Endothelial cell of umbilical vein (primary cell): ENCODE measurements at regions of chr4 and their contacts with region 1.

Region 1: DNA sequence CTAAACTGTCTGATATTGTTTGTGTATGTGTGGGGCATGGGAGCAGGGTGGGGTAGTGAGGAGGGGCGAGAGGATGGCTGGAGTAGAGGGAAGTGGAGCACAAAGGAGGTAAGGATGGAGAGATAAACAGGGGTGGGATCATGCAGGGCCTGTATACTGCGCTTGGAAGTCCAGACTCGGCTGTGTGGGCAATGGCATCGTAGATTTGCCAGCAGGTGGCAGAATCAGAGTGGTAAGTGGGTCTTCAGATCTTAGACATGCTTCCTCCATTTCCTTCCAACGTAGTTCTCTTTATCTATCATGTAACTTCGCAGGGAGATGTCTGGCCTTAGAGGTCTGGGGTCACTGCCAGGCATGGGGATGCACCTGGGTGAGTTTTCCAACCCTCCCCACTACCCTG is 155.5 kb downstream of the PDGFRA start:
- DNase-seq: peak; percentile 47
- H3K4me3 ChIP-seq: no peak overlapping the region
- H3K27ac ChIP-seq: no peak overlapping the region
- H3K4me1 ChIP-seq: no peaks in the 10 kb centered on the region
- H3K27me3 ChIP-seq: no peaks in the 10 kb centered on the region
- CTCF ChIP-seq: peak; percentile 24 to 53
- POLR2A ChIP-seq: no peak

Region 2: GRCh38 chr4:54363037-54363436 is 21.5 kb before region 1 on chr4:
- CTCF ChIA-PET with region 1: no interaction called
- POLR2A ChIA-PET with region 1: no interaction called
- dilution Hi-C with region 1: no loop called
- intact Hi-C with region 1: no loop called
- DNase-seq: no peak
- H3K4me3 ChIP-seq: no peak overlapping the region
- H3K27ac ChIP-seq: no peak overlapping the region
- H3K4me1 ChIP-seq: no peaks in the 10 kb centered on the region
- H3K27me3 ChIP-seq: no peaks in the 10 kb centered on the region
- CTCF ChIP-seq: no peak
- POLR2A ChIP-seq: no peak

Region 3: DNA sequence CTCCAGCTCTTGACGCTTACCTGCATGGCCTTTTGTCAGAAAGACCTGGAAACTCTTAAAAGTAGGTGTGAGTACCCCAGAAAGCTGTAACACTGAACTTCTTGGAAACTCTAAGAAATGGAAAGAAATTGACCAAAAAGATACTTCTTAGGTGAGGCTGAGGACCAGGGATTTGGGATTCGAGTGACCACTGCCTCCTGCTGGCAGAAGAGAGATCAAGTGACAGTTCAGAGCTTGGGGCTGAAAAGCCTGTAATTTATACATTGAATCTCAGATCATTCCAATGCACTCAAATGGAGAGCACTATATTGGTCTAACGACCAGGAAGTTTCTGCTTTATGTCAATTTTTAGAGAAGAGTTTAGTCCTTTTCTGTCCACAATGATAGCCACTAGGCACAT is 49.1 kb after region 1 on chr4:
- CTCF ChIA-PET with region 1: interaction called, 33 read pairs
- POLR2A ChIA-PET with region 1: no interaction called
- dilution Hi-C with region 1: no loop called
- intact Hi-C with region 1: loop called (anchors 1 kb)
- DNase-seq: peak; percentile 30
- H3K4me3 ChIP-seq: no peak overlapping the region
- H3K27ac ChIP-seq: no peak overlapping the region
- H3K4me1 ChIP-seq: no peaks in the 10 kb centered on the region
- H3K27me3 ChIP-seq: peaks cover 2 to 5% of the 10 kb centered on the region in 2 experiments
- CTCF ChIP-seq: peak; percentile 48 to 49
- POLR2A ChIP-seq: no peak

Region 4: DNA sequence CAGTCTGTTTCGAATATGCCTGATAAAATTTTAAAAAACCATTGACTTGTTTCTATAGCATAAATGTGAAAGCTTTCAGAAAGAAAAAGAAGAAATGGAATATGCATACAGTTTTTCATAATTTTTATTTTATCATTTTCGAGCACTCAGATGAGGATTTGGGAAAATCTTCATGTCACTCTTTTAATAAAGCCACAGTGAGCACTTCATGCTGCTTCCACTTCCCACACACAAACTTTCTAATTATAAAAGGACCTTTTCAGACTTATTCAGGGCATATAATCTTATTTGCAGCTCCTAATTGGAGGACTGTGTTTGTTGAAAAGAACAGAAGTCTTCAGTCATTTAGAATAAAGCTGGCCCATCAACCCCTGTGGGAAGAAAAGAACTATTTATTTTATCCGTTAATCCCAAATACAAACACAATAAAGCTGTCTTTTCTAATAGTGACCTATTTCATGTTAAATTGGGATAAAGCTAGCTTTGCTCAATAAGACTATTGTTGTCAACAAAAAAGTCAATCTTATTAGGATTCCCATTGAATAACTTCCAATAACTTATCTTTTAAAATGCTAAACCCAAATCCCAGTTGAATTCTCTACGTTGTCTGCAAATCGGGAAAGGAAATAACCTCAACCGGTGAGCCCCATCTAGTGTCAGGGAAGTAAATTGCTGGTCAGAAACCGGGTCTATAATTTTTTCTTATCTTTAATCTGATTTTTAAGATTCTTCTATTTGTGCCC is 56.0 kb after region 1 on chr4:
- CTCF ChIA-PET with region 1: interaction called, 17 read pairs
- POLR2A ChIA-PET with region 1: no interaction called
- dilution Hi-C with region 1: no loop called
- intact Hi-C with region 1: loop called (anchors 1 kb)
- DNase-seq: peak; percentile 42
- H3K4me3 ChIP-seq: no peak overlapping the region
- H3K27ac ChIP-seq: no peak overlapping the region
- H3K4me1 ChIP-seq: no peaks in the 10 kb centered on the region
- H3K27me3 ChIP-seq: peaks cover 0 to 7% of the 10 kb centered on the region in 2 experiments
- CTCF ChIP-seq: peak; percentile 30 to 34
- POLR2A ChIP-seq: no peak